Naive thymus-derived CD4-positive, alpha-beta T cell (primary cell): ENCODE measurements at regions of chr6 and their contacts with region 1.

Region 1: DNA sequence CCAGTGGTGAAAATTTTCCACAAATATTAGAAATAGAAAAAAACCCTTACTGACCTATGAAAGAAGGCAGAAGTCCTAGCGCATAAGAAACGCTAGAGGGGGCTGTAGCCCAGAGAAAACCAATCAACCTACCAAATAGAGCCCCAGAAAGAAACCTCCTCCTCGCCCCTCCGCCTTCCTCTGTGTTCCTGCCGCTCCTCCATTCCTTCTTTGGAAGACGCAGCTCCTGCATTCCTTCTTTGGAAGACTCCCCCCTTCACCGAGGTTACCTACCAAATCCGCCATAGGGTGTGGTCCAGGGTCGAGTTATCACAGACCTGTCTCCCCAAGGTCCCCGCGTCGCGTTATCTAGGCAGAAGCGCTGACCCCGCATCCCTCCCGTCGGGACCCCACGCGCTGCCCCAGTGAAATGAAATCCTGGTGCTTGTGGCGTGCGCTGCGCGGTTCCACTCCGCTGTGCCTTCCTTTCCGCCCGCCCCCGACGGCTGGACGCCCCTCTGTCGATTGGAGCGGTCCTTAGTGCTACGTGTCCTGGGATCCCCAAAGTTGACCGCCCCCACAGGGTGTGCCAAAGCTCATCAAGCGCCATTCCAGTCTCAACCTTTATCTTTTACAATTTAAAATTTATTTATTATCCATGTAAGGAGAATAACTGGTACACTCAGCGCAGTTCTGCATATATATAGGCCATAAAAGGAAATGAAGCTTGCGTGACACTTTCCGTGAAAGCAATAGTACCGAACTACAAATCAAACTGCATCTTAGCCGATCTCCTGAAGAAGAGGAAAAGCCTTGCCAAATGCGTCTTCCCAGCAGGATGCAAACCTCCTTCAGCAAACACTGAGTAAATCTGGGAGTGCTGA is 13.0 kb downstream of the RPP21 start:
- DNase-seq: peak; percentile 19 to 62 (median 51)
- ATAC-seq: peak; percentile 83
- H3K4me3 ChIP-seq: peak overlapping the region; percentile 59
- H3K4me3 Mint-ChIP-seq: peak overlapping the region; percentile 75 to 89 (median 86)
- H3K27ac ChIP-seq: no peak overlapping the region
- H3K27ac Mint-ChIP-seq: no peak overlapping the region
- H3K4me1 ChIP-seq: peaks cover 0 to 5% of the 10 kb centered on the region in 2 donors
- H3K4me1 Mint-ChIP-seq: peaks cover 0 to 10% (median 6%) of the 10 kb centered on the region in 7 donors
- H3K27me3 ChIP-seq: peaks cover 10 to 11% of the 10 kb centered on the region in 2 donors
- H3K27me3 Mint-ChIP-seq: peaks cover 37 to 84% (median 56%) of the 10 kb centered on the region in 5 donors

Region 2: DNA sequence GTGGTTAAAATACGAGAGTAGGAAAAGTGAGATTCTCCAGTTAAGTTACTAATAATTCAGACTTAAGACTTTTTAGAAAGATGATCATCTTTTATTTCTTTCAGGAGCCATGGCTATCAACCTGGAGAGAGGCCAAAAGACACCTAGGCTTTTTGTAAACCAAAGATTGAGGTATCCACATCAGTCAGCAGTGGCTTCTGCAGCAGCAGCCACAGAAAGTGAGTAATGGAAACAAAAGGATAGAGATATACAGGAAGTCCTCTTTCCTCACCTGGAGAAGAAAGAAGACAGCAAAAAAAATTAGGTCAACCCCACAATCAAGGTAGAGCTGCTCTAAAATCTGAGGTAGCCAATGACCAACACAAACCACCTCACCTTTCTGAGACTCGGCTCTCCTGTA is 53.9 kb before region 1 on chr6:
- CTCF ChIA-PET with region 1: no interaction called
- POLR2A ChIA-PET with region 1: no interaction called
- intact Hi-C with region 1: no loop called
- DNase-seq: no peak
- ATAC-seq: no peak
- H3K4me3 ChIP-seq: no peak overlapping the region
- H3K4me3 Mint-ChIP-seq: peak overlapping the region in 2 of 10 donors; percentile 27 to 38
- H3K27ac ChIP-seq: no peak overlapping the region
- H3K27ac Mint-ChIP-seq: peak overlapping the region in 2 of 9 donors; percentile 16 to 65
- H3K4me1 ChIP-seq: peaks cover 0 to 3% of the 10 kb centered on the region in 2 donors
- H3K4me1 Mint-ChIP-seq: peaks cover 20 to 61% (median 45%) of the 10 kb centered on the region in 7 donors
- H3K27me3 ChIP-seq: no peaks in the 10 kb centered on the region
- H3K27me3 Mint-ChIP-seq: no peaks in the 10 kb centered on the region

Region 3: DNA sequence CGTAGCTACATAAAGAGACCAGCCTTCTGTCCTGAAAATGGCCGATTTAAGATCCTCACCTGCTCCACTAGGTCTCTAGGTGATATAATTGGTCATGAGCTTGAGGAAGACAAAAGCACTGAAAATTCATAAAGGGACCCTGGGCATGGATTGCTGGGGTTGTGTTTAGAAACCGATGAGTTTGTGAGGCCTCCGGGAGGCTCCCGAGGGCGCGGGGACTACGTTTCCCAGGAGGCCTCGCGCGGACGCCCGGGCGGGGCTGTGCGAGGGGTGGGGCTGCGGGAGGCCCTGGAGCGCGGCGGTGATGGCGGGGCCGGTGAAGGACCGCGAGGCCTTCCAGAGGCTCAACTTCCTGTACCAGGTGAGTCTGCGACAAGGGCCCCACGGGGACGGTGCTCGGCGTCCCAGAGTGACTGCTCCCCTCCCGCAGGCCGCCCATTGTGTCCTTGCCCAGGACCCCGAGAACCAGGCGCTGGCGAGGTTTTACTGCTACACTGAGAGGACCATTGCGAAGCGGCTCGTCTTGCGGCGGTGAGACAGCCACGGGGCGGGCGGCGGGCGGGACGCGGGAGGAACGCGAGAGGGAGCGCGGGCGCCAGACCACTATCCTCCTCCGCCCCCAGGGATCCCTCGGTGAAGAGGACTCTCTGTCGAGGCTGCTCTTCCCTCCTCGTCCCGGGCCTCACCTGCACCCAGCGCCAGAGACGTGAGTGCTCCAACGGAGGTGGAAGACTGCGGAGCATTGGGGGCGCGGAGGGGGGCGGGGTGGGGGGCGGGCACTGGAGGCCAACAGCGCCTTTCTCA is 12.8 kb before region 1 on chr6 and contains the start of gene RPP21:
- CTCF ChIA-PET with region 1: no interaction called
- POLR2A ChIA-PET with region 1: interaction called, 3 read pairs
- intact Hi-C with region 1: loop called in 1 of 2 experiments (anchors 1 kb)
- DNase-seq: peak; percentile 74 to 91 (median 86)
- ATAC-seq: peak; percentile 99
- H3K4me3 ChIP-seq: peak within 1 kb of the TSS; percentile 77
- H3K4me3 Mint-ChIP-seq: peak within 1 kb of the TSS; percentile 81 to 94 (median 89)
- H3K27ac ChIP-seq: peak within 1 kb of the TSS; percentile 97
- H3K27ac Mint-ChIP-seq: peak within 1 kb of the TSS; percentile 84 to 97 (median 92)
- H3K4me1 ChIP-seq: peaks cover 0 to 12% of the 10 kb centered on the region in 2 donors
- H3K4me1 Mint-ChIP-seq: peaks cover 12 to 32% (median 24%) of the 10 kb centered on the region in 7 donors
- H3K27me3 ChIP-seq: no peaks in the 10 kb centered on the region
- H3K27me3 Mint-ChIP-seq: peaks cover 0 to 7% (median 0%) of the 10 kb centered on the region in 5 donors
- total RNA-seq, gene RPP21: 39.7 to 61.2 (median 44.9) TPM

Region 4: GRCh38 chr6:30396833-30397479 is 39.0 kb after region 1 on chr6:
- CTCF ChIA-PET with region 1: interaction called, 4 read pairs
- POLR2A ChIA-PET with region 1: no interaction called
- intact Hi-C with region 1: loop called (anchors 1 kb)
- DNase-seq: peak; percentile 58 to 89 (median 76)
- ATAC-seq: peak; percentile 99
- H3K4me3 ChIP-seq: no peak overlapping the region
- H3K4me3 Mint-ChIP-seq: peak overlapping the region in 2 of 10 donors; percentile 39 to 44
- H3K27ac ChIP-seq: no peak overlapping the region
- H3K27ac Mint-ChIP-seq: peak overlapping the region in 1 of 9 donors; percentile 67
- H3K4me1 ChIP-seq: no peaks in the 10 kb centered on the region
- H3K4me1 Mint-ChIP-seq: peaks cover 0 to 6% (median 0%) of the 10 kb centered on the region in 7 donors
- H3K27me3 ChIP-seq: peaks cover 0 to 4% of the 10 kb centered on the region in 2 donors
- H3K27me3 Mint-ChIP-seq: peaks cover 20 to 51% (median 40%) of the 10 kb centered on the region in 5 donors

Region 5: GRCh38 chr6:30489081-30490025 is 131.4 kb after region 1 on chr6 and contains the start of gene HLA-E:
- CTCF ChIA-PET with region 1: no interaction called
- POLR2A ChIA-PET with region 1: no interaction called
- intact Hi-C with region 1: no loop called
- DNase-seq: peak; percentile 62 to 99 (median 95)
- ATAC-seq: peak; percentile 89
- H3K4me3 ChIP-seq: peak within 1 kb of the TSS; percentile 83
- H3K4me3 Mint-ChIP-seq: peak within 1 kb of the TSS; percentile 94 to 100 (median 99)
- H3K27ac ChIP-seq: peak within 1 kb of the TSS; percentile 97
- H3K27ac Mint-ChIP-seq: peak within 1 kb of the TSS; percentile 96 to 99 (median 99)
- H3K4me1 ChIP-seq: peaks cover 26 to 33% of the 10 kb centered on the region in 2 donors
- H3K4me1 Mint-ChIP-seq: peaks cover 33 to 61% (median 46%) of the 10 kb centered on the region in 7 donors
- H3K27me3 ChIP-seq: no peaks in the 10 kb centered on the region
- H3K27me3 Mint-ChIP-seq: peaks cover 0 to 7% (median 0%) of the 10 kb centered on the region in 5 donors
- total RNA-seq, gene HLA-E: 614 to 1,412 (median 1,095) TPM

Region 6: DNA sequence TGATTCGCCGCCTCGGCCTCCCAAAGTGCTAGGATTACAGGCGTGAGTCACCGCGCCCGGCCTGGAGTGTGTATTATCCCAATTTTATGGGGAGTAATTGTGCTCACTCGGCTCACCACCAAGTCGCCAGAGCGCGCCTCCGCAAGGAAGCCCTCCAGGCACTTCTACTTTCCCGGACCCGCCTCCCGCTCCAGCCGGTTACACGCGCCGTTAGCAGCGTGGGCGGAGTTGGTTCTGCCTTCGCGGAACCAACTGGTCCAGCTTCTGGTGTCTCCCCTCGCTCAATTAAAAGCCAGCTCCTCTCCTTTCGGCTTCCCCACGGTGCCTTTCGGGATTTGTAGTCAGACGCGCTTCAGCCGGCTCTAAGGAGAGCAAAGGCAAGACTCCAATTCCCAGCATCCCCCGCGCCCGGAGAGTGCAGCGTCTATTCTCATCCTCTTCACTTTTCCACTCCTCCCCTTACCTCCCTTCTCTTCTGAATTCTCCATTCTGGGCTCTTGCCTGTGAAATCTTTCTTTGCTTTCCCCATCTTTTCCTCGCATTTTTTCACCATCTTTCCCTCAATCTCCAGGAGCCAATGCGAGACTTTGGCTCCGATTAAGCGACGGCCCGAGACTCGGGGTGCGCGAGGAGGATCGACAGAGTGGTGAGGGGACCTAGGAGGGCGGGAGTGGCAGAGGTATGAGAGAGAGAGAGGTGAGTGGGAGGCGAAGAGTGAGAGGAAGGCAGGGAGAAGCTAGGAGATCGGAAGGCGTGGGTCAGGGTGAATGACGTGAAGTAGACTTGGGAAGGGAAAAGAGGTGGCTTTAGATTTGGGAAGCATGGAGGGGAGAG is 550.1 kb after region 1 on chr6 and contains the start of gene GTF2H4:
- CTCF ChIA-PET with region 1: no interaction called
- POLR2A ChIA-PET with region 1: no interaction called
- intact Hi-C with region 1: no loop called
- DNase-seq: peak; percentile 77 to 96 (median 89)
- ATAC-seq: peak; percentile 99
- H3K4me3 ChIP-seq: peak within 1 kb of the TSS; percentile 90
- H3K4me3 Mint-ChIP-seq: peak within 1 kb of the TSS; percentile 95 to 100 (median 99)
- H3K27ac ChIP-seq: peak within 1 kb of the TSS; percentile 78
- H3K27ac Mint-ChIP-seq: peak within 1 kb of the TSS; percentile 72 to 95 (median 82)
- H3K4me1 ChIP-seq: peaks cover 6 to 9% of the 10 kb centered on the region in 2 donors
- H3K4me1 Mint-ChIP-seq: peaks cover 15 to 34% (median 22%) of the 10 kb centered on the region in 7 donors
- H3K27me3 ChIP-seq: no peaks in the 10 kb centered on the region
- H3K27me3 Mint-ChIP-seq: no peaks in the 10 kb centered on the region
- total RNA-seq, gene GTF2H4: 18.8 to 42.3 (median 32.2) TPM

Region 7: GRCh38 chr6:30955367-30956042 is 597.6 kb after region 1 on chr6:
- CTCF ChIA-PET with region 1: no interaction called
- POLR2A ChIA-PET with region 1: no interaction called
- intact Hi-C with region 1: no loop called
- DNase-seq: peak; percentile 49 to 76 (median 63)
- ATAC-seq: peak; percentile 84
- H3K4me3 ChIP-seq: peak overlapping the region; percentile 62
- H3K4me3 Mint-ChIP-seq: peak overlapping the region; percentile 59 to 92 (median 86)
- H3K27ac ChIP-seq: peak overlapping the region; percentile 50
- H3K27ac Mint-ChIP-seq: peak overlapping the region in 8 of 9 donors; percentile 77 to 93 (median 89)
- H3K4me1 ChIP-seq: peaks cover 5 to 12% of the 10 kb centered on the region in 2 donors
- H3K4me1 Mint-ChIP-seq: peaks cover 3 to 37% (median 27%) of the 10 kb centered on the region in 7 donors
- H3K27me3 ChIP-seq: no peaks in the 10 kb centered on the region
- H3K27me3 Mint-ChIP-seq: peaks cover 5 to 81% (median 7%) of the 10 kb centered on the region in 5 donors